ENCODE measurements at regions of chr11 and their contacts with region 1.

Region 1: DNA sequence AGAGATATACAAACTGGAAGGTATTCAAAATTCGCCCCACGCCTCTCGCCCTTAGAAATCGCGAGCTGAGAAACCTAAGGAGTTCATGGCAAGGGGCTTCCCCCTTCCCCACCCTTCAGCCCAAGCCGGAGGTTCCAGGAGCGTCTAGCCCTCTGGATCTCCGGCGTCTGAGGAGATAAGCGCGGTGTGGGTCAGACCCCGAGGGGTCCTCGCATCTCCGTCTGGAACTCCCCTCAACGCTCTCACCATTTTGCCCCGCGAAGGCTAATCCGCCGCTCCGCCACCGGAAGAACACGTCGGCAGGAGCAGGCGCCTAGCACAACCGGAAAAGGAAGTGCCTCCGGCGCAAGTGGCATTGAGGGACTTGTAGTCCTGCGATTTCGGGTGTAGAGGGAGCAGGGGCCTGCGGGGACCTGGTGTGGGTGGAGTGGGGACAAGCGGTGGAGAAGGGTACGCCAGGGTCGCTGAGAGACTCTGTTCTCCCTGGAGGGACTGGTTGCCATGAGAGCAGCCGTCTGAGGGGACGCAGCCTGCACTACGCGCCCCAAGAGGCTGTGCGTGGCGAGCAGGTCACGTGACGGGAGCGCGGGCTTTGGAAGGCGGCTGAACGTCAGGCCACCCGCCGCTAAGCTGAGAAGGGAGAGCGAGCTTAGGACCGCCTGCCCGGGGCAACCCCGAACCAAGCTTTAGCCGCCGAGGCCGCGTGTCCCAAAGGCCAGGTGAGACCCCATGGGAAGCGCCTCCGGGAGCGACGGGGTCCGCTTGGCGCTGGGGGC is at the starts of genes FEN1 and TMEM258:
- DNase-seq: peak; percentile 87 to 92 (median 91)
- H3K4me3 ChIP-seq: peak within 1 kb of the TSS; percentile 95 to 96
- H3K4me3 Mint-ChIP-seq: peak within 1 kb of the TSS; percentile 89 to 99 (median 94)
- H3K27ac ChIP-seq: peak within 1 kb of the TSS; percentile 98
- H3K27ac Mint-ChIP-seq: peak within 1 kb of the TSS; percentile 93 to 100 (median 99)
- H3K4me1 ChIP-seq: peaks cover 21% of the 10 kb centered on the region
- H3K4me1 Mint-ChIP-seq: peaks cover 12 to 56% (median 31%) of the 10 kb centered on the region in 4 donors
- H3K27me3 ChIP-seq: no peaks in the 10 kb centered on the region
- H3K27me3 Mint-ChIP-seq: no peaks in the 10 kb centered on the region
- total RNA-seq, gene FEN1: 7.4 to 8.0 TPM
- total RNA-seq, gene TMEM258: 113 to 117 TPM

Region 2: GRCh38 chr11:61406067-61406466 is 386.4 kb before region 1 on chr11:
- CTCF ChIA-PET with region 1: no interaction called
- POLR2A ChIA-PET with region 1: no interaction called
- intact Hi-C with region 1: no loop called
- DNase-seq: no peak
- H3K4me3 ChIP-seq: no peak overlapping the region
- H3K4me3 Mint-ChIP-seq: no peak overlapping the region
- H3K27ac ChIP-seq: no peak overlapping the region
- H3K27ac Mint-ChIP-seq: no peak overlapping the region
- H3K4me1 ChIP-seq: no peaks in the 10 kb centered on the region
- H3K4me1 Mint-ChIP-seq: peaks cover 0 to 4% (median 1%) of the 10 kb centered on the region in 4 donors
- H3K27me3 ChIP-seq: no peaks in the 10 kb centered on the region
- H3K27me3 Mint-ChIP-seq: no peaks in the 10 kb centered on the region

Region 3: GRCh38 chr11:61679893-61680621 is 112.4 kb before region 1 on chr11 and contains the start of gene DAGLA:
- CTCF ChIA-PET with region 1: interaction called, 3 read pairs
- POLR2A ChIA-PET with region 1: no interaction called
- intact Hi-C with region 1: loop called (anchors 1 kb)
- DNase-seq: peak; percentile 71 to 82 (median 72)
- H3K4me3 ChIP-seq: peak within 1 kb of the TSS in 1 of 2 donors; percentile 19
- H3K4me3 Mint-ChIP-seq: peak within 1 kb of the TSS; percentile 69 to 83 (median 75)
- H3K27ac ChIP-seq: no peak within 1 kb of the TSS
- H3K27ac Mint-ChIP-seq: peak within 1 kb of the TSS in 6 of 7 donors; percentile 28 to 91 (median 52)
- H3K4me1 ChIP-seq: peaks cover 22% of the 10 kb centered on the region
- H3K4me1 Mint-ChIP-seq: peaks cover 0 to 14% (median 6%) of the 10 kb centered on the region in 4 donors
- H3K27me3 ChIP-seq: no peaks in the 10 kb centered on the region
- H3K27me3 Mint-ChIP-seq: peaks cover 4 to 16% of the 10 kb centered on the region in 2 donors
- total RNA-seq, gene DAGLA: 0.30 to 0.44 TPM

Region 4: DNA sequence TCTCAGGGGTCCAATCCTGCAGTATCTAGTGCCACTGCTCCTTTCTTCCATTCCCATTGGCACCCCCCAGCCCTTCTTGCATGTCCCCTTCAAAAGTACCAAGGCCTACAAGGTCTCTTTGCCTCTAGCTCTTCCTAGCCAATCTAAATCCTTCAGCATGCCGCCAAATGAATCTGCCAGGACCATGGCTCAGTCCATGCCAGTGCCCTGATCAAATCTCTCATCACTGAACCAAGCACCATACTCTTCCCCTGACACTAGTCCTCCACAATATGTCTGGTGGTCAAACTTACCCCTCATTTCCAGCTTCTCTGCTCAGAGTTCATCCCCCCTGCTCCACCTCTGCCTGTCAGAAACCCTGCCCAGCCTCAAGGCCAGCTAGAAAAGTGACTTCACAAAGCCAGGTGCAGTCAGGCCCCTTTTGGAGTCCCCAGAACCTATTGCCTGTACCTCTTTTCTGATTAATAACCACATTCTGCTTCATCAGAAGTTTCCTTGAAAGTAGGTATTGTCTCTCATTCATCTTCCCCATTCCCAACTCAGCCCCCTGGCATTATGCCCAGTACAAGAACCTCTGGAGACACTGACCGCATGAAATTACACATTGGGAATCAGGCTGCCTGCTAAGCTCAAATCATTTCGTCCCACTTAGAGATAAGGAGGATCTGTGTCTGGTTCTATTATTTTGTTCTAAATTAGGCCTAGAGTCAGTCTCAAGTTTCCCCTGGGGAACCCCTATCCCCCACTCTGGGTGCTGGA is 11.6 kb after region 1 on chr11:
- CTCF ChIA-PET with region 1: interaction called, 27 read pairs
- POLR2A ChIA-PET with region 1: interaction called, 6 read pairs
- intact Hi-C with region 1: no loop called
- DNase-seq: no peak
- H3K4me3 ChIP-seq: no peak overlapping the region
- H3K4me3 Mint-ChIP-seq: no peak overlapping the region
- H3K27ac ChIP-seq: no peak overlapping the region
- H3K27ac Mint-ChIP-seq: peak overlapping the region in 1 of 7 donors; percentile 24
- H3K4me1 ChIP-seq: no peaks in the 10 kb centered on the region
- H3K4me1 Mint-ChIP-seq: no peaks in the 10 kb centered on the region
- H3K27me3 ChIP-seq: no peaks in the 10 kb centered on the region
- H3K27me3 Mint-ChIP-seq: no peaks in the 10 kb centered on the region

Region 5: GRCh38 chr11:61834278-61835048 is 42.0 kb after region 1 on chr11:
- CTCF ChIA-PET with region 1: interaction called, 12 read pairs
- POLR2A ChIA-PET with region 1: no interaction called
- intact Hi-C with region 1: no loop called
- DNase-seq: peak; percentile 29 to 74 (median 49)
- H3K4me3 ChIP-seq: no peak overlapping the region
- H3K4me3 Mint-ChIP-seq: peak overlapping the region in 5 of 8 donors; percentile 28 to 70 (median 59)
- H3K27ac ChIP-seq: peak overlapping the region; percentile 28
- H3K27ac Mint-ChIP-seq: peak overlapping the region in 6 of 7 donors; percentile 33 to 98 (median 60)
- H3K4me1 ChIP-seq: peaks cover 20% of the 10 kb centered on the region
- H3K4me1 Mint-ChIP-seq: peaks cover 13 to 32% (median 23%) of the 10 kb centered on the region in 4 donors
- H3K27me3 ChIP-seq: peaks cover 3% of the 10 kb centered on the region
- H3K27me3 Mint-ChIP-seq: peaks cover 6 to 11% of the 10 kb centered on the region in 2 donors

Region 6: GRCh38 chr11:61917341-61918109 is 125.0 kb after region 1 on chr11 and contains the start of gene RAB3IL1:
- CTCF ChIA-PET with region 1: no interaction called
- POLR2A ChIA-PET with region 1: no interaction called
- intact Hi-C with region 1: no loop called
- DNase-seq: no peak
- H3K4me3 ChIP-seq: no peak within 1 kb of the TSS
- H3K4me3 Mint-ChIP-seq: peak within 1 kb of the TSS; percentile 71 to 85 (median 81)
- H3K27ac ChIP-seq: no peak within 1 kb of the TSS
- H3K27ac Mint-ChIP-seq: peak within 1 kb of the TSS in 2 of 7 donors; percentile 48 to 82
- H3K4me1 ChIP-seq: no peaks in the 10 kb centered on the region
- H3K4me1 Mint-ChIP-seq: peaks cover 3 to 14% (median 9%) of the 10 kb centered on the region in 4 donors
- H3K27me3 ChIP-seq: peaks cover 8% of the 10 kb centered on the region
- H3K27me3 Mint-ChIP-seq: peaks cover 30 to 57% of the 10 kb centered on the region in 2 donors
- total RNA-seq, gene RAB3IL1: 0.44 to 0.53 TPM

Region 7: DNA sequence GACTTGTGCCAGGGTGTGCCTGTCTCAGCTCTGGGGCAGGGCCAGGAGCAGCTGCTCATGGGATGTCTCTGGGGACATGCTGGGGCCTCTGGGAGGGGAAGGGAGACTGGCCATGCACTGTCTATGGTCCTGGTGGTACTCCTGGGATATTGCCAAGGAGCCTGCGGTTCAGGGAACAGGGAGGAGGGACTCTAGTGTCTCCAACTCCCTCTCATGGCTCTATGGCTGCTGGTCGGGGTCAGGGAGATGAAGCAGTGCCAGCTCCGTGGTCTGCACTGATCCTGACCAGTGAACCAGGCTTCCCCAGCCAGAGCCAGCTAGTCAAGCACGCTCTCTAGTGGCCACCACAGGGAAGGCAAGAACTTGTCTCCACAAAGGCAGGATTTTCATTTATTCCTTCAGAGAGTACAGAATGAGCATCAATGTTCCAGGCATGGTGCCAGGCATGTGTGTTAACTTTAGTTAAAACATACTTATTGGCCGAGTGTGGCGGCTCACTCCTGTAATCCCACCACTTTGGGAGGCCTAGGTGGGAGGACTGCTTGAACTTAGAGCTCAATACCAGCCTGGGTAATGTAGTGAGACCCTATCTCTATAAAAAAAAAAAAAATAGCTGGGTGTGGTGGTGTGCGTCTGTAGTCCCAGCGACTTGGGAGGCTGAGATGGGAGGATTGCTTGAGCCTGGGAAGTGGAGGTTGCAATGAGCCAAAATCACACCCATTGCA is 155.2 kb after region 1 on chr11:
- CTCF ChIA-PET with region 1: interaction called, 96 read pairs
- POLR2A ChIA-PET with region 1: interaction called, 5 read pairs
- intact Hi-C with region 1: loop called (anchors 1 kb)
- DNase-seq: peak; percentile 55 to 64 (median 59)
- H3K4me3 ChIP-seq: no peak overlapping the region
- H3K4me3 Mint-ChIP-seq: no peak overlapping the region
- H3K27ac ChIP-seq: no peak overlapping the region
- H3K27ac Mint-ChIP-seq: peak overlapping the region in 2 of 7 donors; percentile 41 to 82
- H3K4me1 ChIP-seq: no peaks in the 10 kb centered on the region
- H3K4me1 Mint-ChIP-seq: no peaks in the 10 kb centered on the region
- H3K27me3 ChIP-seq: no peaks in the 10 kb centered on the region
- H3K27me3 Mint-ChIP-seq: peaks cover 0 to 3% of the 10 kb centered on the region in 2 donors

Region 8: GRCh38 chr11:62025487-62026105 is 233.1 kb after region 1 on chr11:
- CTCF ChIA-PET with region 1: no interaction called
- POLR2A ChIA-PET with region 1: interaction called, 6 read pairs
- intact Hi-C with region 1: loop called (anchors 1 kb)
- DNase-seq: peak; percentile 90 to 98 (median 95)
- H3K4me3 ChIP-seq: peak overlapping the region in 1 of 2 donors; percentile 35
- H3K4me3 Mint-ChIP-seq: peak overlapping the region; percentile 67 to 91 (median 78)
- H3K27ac ChIP-seq: peak overlapping the region; percentile 86
- H3K27ac Mint-ChIP-seq: peak overlapping the region; percentile 94 to 100 (median 100)
- H3K4me1 ChIP-seq: peaks cover 24% of the 10 kb centered on the region
- H3K4me1 Mint-ChIP-seq: peaks cover 13 to 30% (median 23%) of the 10 kb centered on the region in 4 donors
- H3K27me3 ChIP-seq: no peaks in the 10 kb centered on the region
- H3K27me3 Mint-ChIP-seq: no peaks in the 10 kb centered on the region

Region 9: GRCh38 chr11:62108017-62108750 is 315.7 kb after region 1 on chr11:
- CTCF ChIA-PET with region 1: interaction called, 165 read pairs
- POLR2A ChIA-PET with region 1: interaction called, 8 read pairs
- intact Hi-C with region 1: loop called (anchors 1 kb)
- DNase-seq: peak; percentile 55 to 71 (median 66)
- H3K4me3 ChIP-seq: no peak overlapping the region
- H3K4me3 Mint-ChIP-seq: peak overlapping the region in 2 of 8 donors; percentile 36 to 39
- H3K27ac ChIP-seq: no peak overlapping the region
- H3K27ac Mint-ChIP-seq: peak overlapping the region in 2 of 7 donors; percentile 60 to 68
- H3K4me1 ChIP-seq: peaks cover 13% of the 10 kb centered on the region
- H3K4me1 Mint-ChIP-seq: peaks cover 9 to 19% (median 13%) of the 10 kb centered on the region in 4 donors
- H3K27me3 ChIP-seq: no peaks in the 10 kb centered on the region
- H3K27me3 Mint-ChIP-seq: no peaks in the 10 kb centered on the region